ENCODE measurements at regions of chr1 and their contacts with region 1.

Region 1: GRCh38 chr1:172609528-172609927 is 49.4 kb upstream of the FASLG start:
- DNase-seq: peak; percentile 12
- H3K4me3 ChIP-seq: no peak overlapping the region
- H3K27ac ChIP-seq: no peak overlapping the region
- H3K4me1 ChIP-seq: no peaks in the 10 kb centered on the region
- CTCF ChIP-seq: peak; percentile 74

Region 2: DNA sequence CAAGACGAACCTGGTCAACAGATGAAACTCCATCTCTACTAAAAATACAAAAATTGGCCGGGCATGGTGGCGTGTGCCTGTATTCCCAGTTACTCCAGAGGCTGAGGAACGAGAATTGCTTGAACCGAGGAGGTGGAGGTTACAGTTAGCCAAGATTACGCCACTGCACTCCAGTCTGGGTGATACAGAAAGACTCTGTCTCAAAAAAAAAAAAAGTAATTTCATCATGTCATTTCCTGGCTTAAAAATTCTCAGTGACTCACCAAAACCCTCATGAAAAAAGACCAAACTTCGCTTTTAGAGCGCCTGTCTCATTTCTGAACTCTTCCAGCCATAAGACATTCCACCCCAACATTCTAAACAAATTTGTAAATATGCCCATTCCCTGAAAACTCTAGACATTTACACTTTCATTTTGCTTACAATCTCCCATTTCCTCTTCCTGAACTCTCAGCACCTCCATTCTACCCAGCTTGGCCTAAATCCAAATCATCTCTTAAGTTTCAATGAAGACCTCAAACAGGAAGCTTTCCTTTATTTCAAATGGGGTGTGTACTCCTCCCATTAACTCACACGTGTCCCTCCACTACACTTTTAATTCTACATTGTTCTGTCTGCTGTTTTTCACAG is 1174.7 kb before region 1 on chr1:
- CTCF ChIA-PET with region 1: no interaction called
- POLR2A ChIA-PET with region 1: no interaction called
- intact Hi-C with region 1: no loop called
- DNase-seq: no peak
- H3K4me3 ChIP-seq: no peak overlapping the region
- H3K27ac ChIP-seq: no peak overlapping the region
- H3K4me1 ChIP-seq: no peaks in the 10 kb centered on the region
- CTCF ChIP-seq: no peak

Region 3: GRCh38 chr1:172719694-172720138 is 110.2 kb after region 1 on chr1:
- CTCF ChIA-PET with region 1: no interaction called
- POLR2A ChIA-PET with region 1: no interaction called
- intact Hi-C with region 1: loop called (anchors 5 kb)
- DNase-seq: peak; percentile 53
- H3K4me3 ChIP-seq: no peak overlapping the region
- H3K27ac ChIP-seq: no peak overlapping the region
- H3K4me1 ChIP-seq: no peaks in the 10 kb centered on the region
- CTCF ChIP-seq: peak; percentile 93